ENCODE measurements at regions of chr1 and their contacts with region 1.

Region 1: DNA sequence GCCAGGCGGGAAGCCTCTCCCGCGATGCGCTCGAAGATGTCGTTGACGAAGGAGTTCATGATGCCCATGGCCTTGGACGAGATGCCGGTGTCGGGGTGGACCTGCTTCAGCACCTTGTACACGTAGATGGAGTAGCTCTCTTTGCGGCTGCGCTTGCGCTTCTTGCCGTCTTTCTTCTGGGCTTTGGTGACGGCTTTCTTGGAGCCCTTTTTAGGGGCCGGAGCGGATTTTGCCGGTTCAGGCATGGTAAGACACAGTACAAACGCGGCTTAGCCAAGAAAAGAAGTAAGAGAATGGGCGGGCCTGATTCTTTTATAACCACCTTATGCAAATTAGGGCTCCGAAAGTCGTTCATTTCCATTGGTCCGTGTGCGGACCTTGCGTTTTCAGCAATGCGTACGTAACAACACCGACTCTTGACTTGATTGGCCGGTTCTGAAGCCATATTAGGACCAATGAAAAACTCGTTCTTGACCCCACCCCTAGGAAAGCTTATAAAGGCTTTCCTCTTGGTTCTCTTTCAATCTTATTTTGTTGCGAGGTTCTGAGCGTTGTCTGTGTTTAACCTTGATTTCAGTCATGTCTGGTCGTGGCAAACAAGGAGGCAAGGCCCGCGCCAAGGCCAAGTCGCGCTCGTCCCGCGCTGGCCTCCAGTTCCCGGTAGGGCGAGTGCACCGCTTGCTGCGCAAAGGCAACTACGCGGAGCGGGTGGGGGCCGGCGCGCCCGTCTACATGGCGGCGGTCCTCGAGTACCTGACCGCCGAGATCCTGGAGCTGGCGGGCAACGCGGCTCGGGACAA is 12.8 kb upstream of the BOLA1 start:
- DNase-seq: peak; percentile 98
- H3K4me3 ChIP-seq: peak overlapping the region; percentile 19 to 91 (median 67)
- H3K27ac ChIP-seq: peak overlapping the region; percentile 97
- H3K4me1 ChIP-seq: peaks cover 16% of the 10 kb centered on the region
- H3K27me3 ChIP-seq: no peaks in the 10 kb centered on the region
- CTCF ChIP-seq: no peak
- POLR2A ChIP-seq: peak; percentile 97

Region 2: DNA sequence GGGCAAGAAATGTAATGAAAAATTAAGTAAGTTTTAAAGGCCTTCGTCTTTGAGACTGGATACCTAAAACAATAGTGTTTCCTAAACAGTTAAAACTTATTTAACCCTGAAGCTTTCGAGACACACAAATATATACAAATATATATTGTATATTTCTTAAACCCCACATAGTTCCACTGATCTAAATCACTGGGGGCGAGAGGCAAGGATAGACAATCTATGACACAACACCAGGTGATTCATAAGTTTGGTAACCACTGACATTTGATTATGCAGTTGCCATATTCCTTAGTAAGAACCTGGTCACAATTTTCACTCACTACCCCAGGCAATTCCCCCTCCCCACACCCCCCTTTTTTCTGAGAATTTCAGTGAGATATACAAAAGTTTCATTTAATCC is 42.5 kb before region 1 on chr1:
- CTCF ChIA-PET with region 1: interaction called, 3 read pairs
- POLR2A ChIA-PET with region 1: interaction called, 20 read pairs
- dilution Hi-C with region 1: no loop called
- intact Hi-C with region 1: no loop called
- DNase-seq: no peak
- H3K4me3 ChIP-seq: peak overlapping the region in 2 of 3 experiments; percentile 77 to 86
- H3K27ac ChIP-seq: peak overlapping the region; percentile 67
- H3K4me1 ChIP-seq: peaks cover 19% of the 10 kb centered on the region
- H3K27me3 ChIP-seq: no peaks in the 10 kb centered on the region
- CTCF ChIP-seq: no peak
- POLR2A ChIP-seq: no peak

Region 3: DNA sequence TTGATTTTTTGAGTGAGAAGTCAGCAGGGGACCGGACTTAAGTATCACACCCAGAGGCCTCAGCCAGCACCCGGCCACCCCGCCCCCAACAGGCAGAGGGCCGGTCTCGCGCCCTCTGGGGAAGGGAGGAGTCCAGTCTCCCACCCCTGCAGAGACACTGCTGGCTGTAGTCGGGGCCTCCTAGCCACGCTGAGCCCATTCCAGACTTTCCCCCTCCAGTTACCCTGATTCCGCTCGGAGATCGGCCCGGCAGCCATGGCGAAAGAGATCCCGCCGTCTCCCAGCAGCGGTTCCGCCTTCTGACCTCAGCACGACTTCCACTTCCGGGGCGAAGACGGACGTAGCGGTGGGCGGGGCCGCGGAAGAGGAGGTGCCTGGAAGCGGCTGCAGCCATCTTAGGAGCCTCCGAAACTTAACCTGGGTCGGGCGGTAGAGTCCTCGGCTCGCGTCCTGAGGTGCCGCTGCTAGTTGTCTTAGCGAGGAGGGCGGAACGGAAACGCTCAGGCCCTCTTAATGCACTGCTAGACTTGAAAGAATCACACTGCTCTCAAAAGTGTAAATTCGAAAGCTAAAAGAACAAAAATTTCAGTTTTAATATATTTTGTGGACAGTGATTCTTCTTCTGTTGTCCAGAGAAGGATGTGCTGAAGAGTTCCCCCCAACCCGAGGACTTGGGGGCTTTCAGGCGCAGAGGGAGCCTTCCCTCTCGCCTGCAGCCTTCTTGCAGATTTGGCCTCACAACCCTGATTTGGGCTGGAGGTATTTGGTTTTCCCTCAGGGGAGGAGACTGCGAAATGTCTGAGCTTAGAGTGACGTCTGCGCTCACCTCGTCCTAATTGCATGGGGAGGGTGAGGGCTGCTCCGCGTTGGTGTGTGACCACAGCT is 41.1 kb after region 1 on chr1 and contains the start of gene SF3B4:
- CTCF ChIA-PET with region 1: interaction called, 3 read pairs
- POLR2A ChIA-PET with region 1: interaction called, 7 read pairs
- dilution Hi-C with region 1: no loop called
- intact Hi-C with region 1: loop called (anchors 1 kb)
- DNase-seq: peak; percentile 94
- H3K4me3 ChIP-seq: peak within 1 kb of the TSS; percentile 65 to 88 (median 77)
- H3K27ac ChIP-seq: peak within 1 kb of the TSS; percentile 74
- H3K4me1 ChIP-seq: peaks cover 27% of the 10 kb centered on the region
- H3K27me3 ChIP-seq: no peaks in the 10 kb centered on the region
- CTCF ChIP-seq: peak in 1 of 2 donors; percentile 13
- POLR2A ChIP-seq: peak; percentile 97
- total RNA-seq, gene SF3B4: 68.7 and 74.4 TPM in 2 replicates

Region 4: GRCh38 chr1:149942207-149942606 is 55.6 kb after region 1 on chr1:
- CTCF ChIA-PET with region 1: interaction called, 38 read pairs
- POLR2A ChIA-PET with region 1: interaction called, 8 read pairs
- dilution Hi-C with region 1: no loop called
- intact Hi-C with region 1: loop called (anchors 1 kb)
- DNase-seq: peak; percentile 57
- H3K4me3 ChIP-seq: no peak overlapping the region
- H3K27ac ChIP-seq: no peak overlapping the region
- H3K4me1 ChIP-seq: peaks cover 22% of the 10 kb centered on the region
- H3K27me3 ChIP-seq: no peaks in the 10 kb centered on the region
- CTCF ChIP-seq: peak in 1 of 2 donors; percentile 39
- POLR2A ChIP-seq: no peak

Region 5: GRCh38 chr1:150034336-150034735 is 147.7 kb after region 1 on chr1:
- CTCF ChIA-PET with region 1: no interaction called
- POLR2A ChIA-PET with region 1: no interaction called
- dilution Hi-C with region 1: loop called (anchors 25 kb)
- intact Hi-C with region 1: no loop called
- DNase-seq: no peak
- H3K4me3 ChIP-seq: no peak overlapping the region
- H3K27ac ChIP-seq: no peak overlapping the region
- H3K4me1 ChIP-seq: no peaks in the 10 kb centered on the region
- H3K27me3 ChIP-seq: no peaks in the 10 kb centered on the region
- CTCF ChIP-seq: no peak
- POLR2A ChIP-seq: no peak

Region 6: DNA sequence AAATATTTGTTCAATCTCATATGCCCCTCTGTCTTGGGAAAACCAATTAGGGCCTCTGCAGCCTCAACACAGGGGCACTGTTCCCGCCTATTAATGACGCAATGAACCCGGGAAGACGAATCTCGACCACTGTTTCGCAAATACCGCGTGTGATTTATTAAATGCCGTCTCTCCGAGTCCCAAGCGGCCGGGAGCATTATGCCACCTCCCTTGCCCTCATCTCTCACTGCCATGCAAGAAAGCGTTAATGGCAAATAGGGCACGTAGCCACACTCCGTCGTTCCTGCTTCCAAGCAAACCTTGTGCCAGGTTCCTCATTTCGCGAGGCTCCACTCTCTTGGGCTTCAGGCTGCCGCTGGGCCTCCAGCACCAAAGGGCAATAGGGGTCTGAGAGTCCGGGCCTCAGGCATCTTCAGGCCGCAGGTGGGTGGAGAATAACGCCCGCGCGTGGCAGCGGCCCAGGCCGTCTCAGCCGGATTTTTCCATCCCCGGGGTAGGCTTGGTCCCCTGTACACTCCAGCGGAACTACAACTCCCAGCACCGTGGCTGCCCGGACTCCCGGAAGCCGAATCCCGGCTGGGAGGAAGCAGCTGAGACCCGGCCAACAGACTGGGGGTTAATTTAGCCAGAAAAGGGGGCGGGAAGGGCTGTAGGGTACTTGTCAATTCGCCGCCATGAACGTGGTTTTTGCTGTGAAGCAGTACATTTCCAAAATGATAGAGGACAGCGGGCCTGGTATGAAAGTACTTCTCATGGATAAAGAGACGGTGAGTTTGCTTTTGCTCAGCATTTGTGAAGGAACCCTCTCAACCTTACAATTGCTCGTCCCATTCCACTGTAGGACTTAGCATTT is 180.8 kb after region 1 on chr1 and contains the start of gene VPS45:
- CTCF ChIA-PET with region 1: no interaction called
- POLR2A ChIA-PET with region 1: interaction called, 3 read pairs
- dilution Hi-C with region 1: no loop called
- intact Hi-C with region 1: loop called (anchors 1 kb)
- DNase-seq: peak; percentile 93
- H3K4me3 ChIP-seq: peak within 1 kb of the TSS; percentile 45 to 85 (median 72)
- H3K27ac ChIP-seq: peak within 1 kb of the TSS; percentile 53
- H3K4me1 ChIP-seq: peaks cover 24% of the 10 kb centered on the region
- H3K27me3 ChIP-seq: no peaks in the 10 kb centered on the region
- CTCF ChIP-seq: peak; percentile 18 to 36
- POLR2A ChIP-seq: no peak
- total RNA-seq, gene VPS45: 40.4 and 43.7 TPM in 2 replicates

Region 7: GRCh38 chr1:150696590-150697524 is 810.3 kb after region 1 on chr1 and contains the start of gene GOLPH3L:
- CTCF ChIA-PET with region 1: no interaction called
- POLR2A ChIA-PET with region 1: no interaction called
- dilution Hi-C with region 1: no loop called
- intact Hi-C with region 1: no loop called
- DNase-seq: peak; percentile 100
- H3K4me3 ChIP-seq: peak within 1 kb of the TSS; percentile 72 to 96 (median 87)
- H3K27ac ChIP-seq: peak within 1 kb of the TSS; percentile 57
- H3K4me1 ChIP-seq: peaks cover 32% of the 10 kb centered on the region
- H3K27me3 ChIP-seq: no peaks in the 10 kb centered on the region
- CTCF ChIP-seq: peak in 1 of 2 donors; percentile 15
- POLR2A ChIP-seq: peak; percentile 73
- total RNA-seq, gene GOLPH3L: 33.2 and 34.9 TPM in 2 replicates

Measured in endothelial cell of umbilical vein (primary cell).